ENCODE measurements at regions of chr11 and their contacts with region 1.

Region 1: GRCh38 chr11:118318581-118319336 is 14.2 kb downstream of the CD3E start:
- DNase-seq: no peak
- ATAC-seq: no peak
- H3K4me3 ChIP-seq: no peak overlapping the region
- H3K4me3 Mint-ChIP-seq: peak overlapping the region in 1 of 3 donors; percentile 73
- H3K27ac ChIP-seq: peak overlapping the region; percentile 39
- H3K27ac Mint-ChIP-seq: peak overlapping the region; percentile 95 to 99
- H3K4me1 ChIP-seq: peaks cover 55 to 90% of the 10 kb centered on the region in 2 experiments
- H3K4me1 Mint-ChIP-seq: peaks cover 87 to 91% (median 89%) of the 10 kb centered on the region in 3 donors
- H3K27me3 ChIP-seq: no peaks in the 10 kb centered on the region
- H3K27me3 Mint-ChIP-seq: no peaks in the 10 kb centered on the region

Region 2: GRCh38 chr11:117843666-117844484 is 474.9 kb before region 1 on chr11:
- CTCF ChIA-PET with region 1: no interaction called
- POLR2A ChIA-PET with region 1: no interaction called
- DNase-seq: peak; percentile 37 to 90 (median 75)
- ATAC-seq: peak; percentile 78 to 83 (median 82)
- H3K4me3 ChIP-seq: no peak overlapping the region
- H3K4me3 Mint-ChIP-seq: no peak overlapping the region
- H3K27ac ChIP-seq: no peak overlapping the region
- H3K27ac Mint-ChIP-seq: no peak overlapping the region
- H3K4me1 ChIP-seq: peaks cover 0 to 8% of the 10 kb centered on the region in 2 experiments
- H3K4me1 Mint-ChIP-seq: peaks cover 0 to 6% (median 0%) of the 10 kb centered on the region in 3 donors
- H3K27me3 ChIP-seq: peaks cover 0 to 6% of the 10 kb centered on the region in 2 experiments
- H3K27me3 Mint-ChIP-seq: peaks cover 0 to 2% of the 10 kb centered on the region in 2 donors

Region 3: GRCh38 chr11:118275197-118275596 is 43.6 kb before region 1 on chr11:
- CTCF ChIA-PET with region 1: no interaction called
- POLR2A ChIA-PET with region 1: interaction called in 1 of 2 experiments, 15 read pairs
- DNase-seq: peak in 1 of 35 experiments; percentile 23
- ATAC-seq: peak in 3 of 4 experiments; percentile 26 to 79 (median 38)
- H3K4me3 ChIP-seq: no peak overlapping the region
- H3K4me3 Mint-ChIP-seq: no peak overlapping the region
- H3K27ac ChIP-seq: no peak overlapping the region
- H3K27ac Mint-ChIP-seq: no peak overlapping the region
- H3K4me1 ChIP-seq: no peaks in the 10 kb centered on the region
- H3K4me1 Mint-ChIP-seq: peaks cover 26 to 32% (median 27%) of the 10 kb centered on the region in 3 donors
- H3K27me3 ChIP-seq: no peaks in the 10 kb centered on the region
- H3K27me3 Mint-ChIP-seq: peaks cover 0 to 1% of the 10 kb centered on the region in 2 donors

Region 4: DNA sequence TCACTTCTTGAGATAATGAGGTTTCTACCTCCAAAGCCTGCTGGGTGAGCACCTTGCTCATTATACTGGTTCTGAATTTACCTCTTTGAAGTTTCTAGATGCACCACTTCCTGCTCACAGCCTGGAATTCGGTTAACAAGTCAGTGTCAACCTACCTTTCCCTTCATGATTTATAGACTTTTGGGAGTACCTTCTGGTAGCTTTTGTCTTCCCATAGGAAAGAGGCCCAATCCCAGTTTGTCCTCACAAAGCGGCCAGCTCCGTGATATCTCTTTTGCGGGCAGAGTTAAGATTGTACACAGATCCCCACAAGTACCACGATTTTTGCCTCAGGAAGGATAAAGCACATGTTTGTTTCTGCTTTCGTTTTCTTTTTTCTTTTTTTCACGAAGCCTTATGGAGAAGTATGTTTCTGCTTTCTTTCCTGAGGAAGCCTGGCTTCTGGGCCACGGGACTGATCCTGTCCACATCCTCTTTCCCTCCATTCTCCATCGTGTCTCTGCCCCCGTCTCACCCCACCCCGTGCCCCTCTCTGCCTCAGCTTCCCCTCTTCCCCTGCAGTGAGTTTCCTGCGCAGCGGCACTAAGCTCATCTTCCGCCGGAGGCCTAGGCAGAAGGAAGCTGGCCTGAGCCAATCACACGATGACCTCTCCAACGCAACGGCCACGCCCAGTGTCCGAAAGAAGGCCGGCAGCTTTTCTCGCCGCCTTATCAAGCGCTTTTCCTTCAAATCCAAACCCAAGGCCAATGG is 796.9 kb after region 1 on chr11:
- CTCF ChIA-PET with region 1: no interaction called
- POLR2A ChIA-PET with region 1: interaction called in 1 of 2 experiments, 18 read pairs
- DNase-seq: peak in 13 of 35 experiments; percentile 10 to 66 (median 23)
- ATAC-seq: peak; percentile 81 to 94 (median 87)
- H3K4me3 ChIP-seq: peak overlapping the region in 1 of 2 donors; percentile 32
- H3K4me3 Mint-ChIP-seq: peak overlapping the region; percentile 76
- H3K27ac ChIP-seq: peak overlapping the region; percentile 79
- H3K27ac Mint-ChIP-seq: peak overlapping the region; percentile 96 to 99
- H3K4me1 ChIP-seq: peaks cover 2 to 41% of the 10 kb centered on the region in 2 experiments
- H3K4me1 Mint-ChIP-seq: peaks cover 32 to 44% (median 39%) of the 10 kb centered on the region in 3 donors
- H3K27me3 ChIP-seq: no peaks in the 10 kb centered on the region
- H3K27me3 Mint-ChIP-seq: no peaks in the 10 kb centered on the region